ENCODE measurements at regions of chr6 and their contacts with region 1.

Region 1: DNA sequence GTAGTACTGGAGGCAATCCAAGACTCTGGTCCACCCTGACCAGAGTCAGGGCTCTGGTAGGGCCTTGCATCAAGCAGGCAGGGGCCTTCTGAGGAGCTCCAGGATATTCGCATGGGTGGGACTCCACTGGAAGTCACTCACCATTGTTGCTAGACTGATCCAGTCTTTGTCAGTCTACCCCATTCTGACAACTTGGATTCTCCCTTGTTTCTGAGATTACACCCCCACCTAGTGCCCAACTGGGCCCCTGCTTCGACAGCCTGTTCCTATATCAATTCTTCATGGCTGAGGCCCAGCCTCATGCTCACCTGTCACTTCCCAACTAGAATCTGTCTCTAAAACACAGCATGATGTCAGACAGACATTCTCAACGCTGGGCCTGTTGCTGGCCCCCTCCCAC is 5.2 kb downstream of the SLC35D3 start:
- DNase-seq: peak in 1 of 2 experiments; percentile 63
- H3K4me3 ChIP-seq: no peak overlapping the region
- H3K4me3 Mint-ChIP-seq: no peak overlapping the region
- H3K27ac Mint-ChIP-seq: no peak overlapping the region
- H3K4me1 ChIP-seq: no peaks in the 10 kb centered on the region
- H3K4me1 Mint-ChIP-seq: no peaks in the 10 kb centered on the region
- H3K27me3 ChIP-seq: no peaks in the 10 kb centered on the region
- H3K27me3 Mint-ChIP-seq: no peaks in the 10 kb centered on the region
- CTCF ChIP-seq: peak; percentile 47 to 51

Region 2: DNA sequence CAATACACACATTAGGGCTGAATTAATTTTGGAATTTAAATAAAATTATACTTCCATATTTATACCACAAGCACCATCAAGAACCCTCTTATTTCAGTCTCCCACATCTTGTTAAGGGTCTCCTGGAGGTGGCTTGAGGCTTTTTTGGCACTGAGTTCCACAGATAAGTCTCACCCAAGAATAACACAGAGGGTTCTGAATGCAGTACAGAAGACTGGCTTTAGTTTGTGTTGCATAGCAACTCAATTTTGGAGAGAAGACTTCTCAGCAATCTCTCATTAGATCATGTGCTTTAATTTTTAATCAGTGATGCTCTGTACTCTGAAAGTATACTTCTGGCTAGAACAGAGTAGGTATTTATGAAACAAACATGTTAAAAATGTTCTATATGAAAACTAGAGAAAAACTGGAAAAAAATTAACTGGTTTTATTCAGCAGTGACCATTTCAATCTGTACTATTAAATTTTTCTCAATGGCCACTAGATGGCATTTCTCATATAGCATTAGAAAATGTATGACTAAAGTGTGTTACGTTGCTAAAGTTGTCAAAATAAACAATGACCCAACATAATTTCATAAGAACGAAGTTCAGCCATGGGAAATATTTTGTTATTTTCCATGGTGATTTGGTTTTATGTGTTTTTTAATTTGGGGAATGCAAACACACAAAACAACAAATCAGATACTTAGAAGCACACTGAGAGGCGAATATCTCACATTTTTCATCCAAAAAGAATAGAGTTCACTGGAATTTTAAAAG is 344.4 kb before region 1 on chr6:
- CTCF ChIA-PET with region 1: no interaction called
- POLR2A ChIA-PET with region 1: no interaction called
- intact Hi-C with region 1: loop called (anchors 2 kb)
- DNase-seq: no peak
- H3K4me3 ChIP-seq: no peak overlapping the region
- H3K4me3 Mint-ChIP-seq: no peak overlapping the region
- H3K27ac Mint-ChIP-seq: no peak overlapping the region
- H3K4me1 ChIP-seq: no peaks in the 10 kb centered on the region
- H3K4me1 Mint-ChIP-seq: peaks cover 3% of the 10 kb centered on the region
- H3K27me3 ChIP-seq: no peaks in the 10 kb centered on the region
- H3K27me3 Mint-ChIP-seq: no peaks in the 10 kb centered on the region
- CTCF ChIP-seq: peak; percentile 45 to 47

Region 3: DNA sequence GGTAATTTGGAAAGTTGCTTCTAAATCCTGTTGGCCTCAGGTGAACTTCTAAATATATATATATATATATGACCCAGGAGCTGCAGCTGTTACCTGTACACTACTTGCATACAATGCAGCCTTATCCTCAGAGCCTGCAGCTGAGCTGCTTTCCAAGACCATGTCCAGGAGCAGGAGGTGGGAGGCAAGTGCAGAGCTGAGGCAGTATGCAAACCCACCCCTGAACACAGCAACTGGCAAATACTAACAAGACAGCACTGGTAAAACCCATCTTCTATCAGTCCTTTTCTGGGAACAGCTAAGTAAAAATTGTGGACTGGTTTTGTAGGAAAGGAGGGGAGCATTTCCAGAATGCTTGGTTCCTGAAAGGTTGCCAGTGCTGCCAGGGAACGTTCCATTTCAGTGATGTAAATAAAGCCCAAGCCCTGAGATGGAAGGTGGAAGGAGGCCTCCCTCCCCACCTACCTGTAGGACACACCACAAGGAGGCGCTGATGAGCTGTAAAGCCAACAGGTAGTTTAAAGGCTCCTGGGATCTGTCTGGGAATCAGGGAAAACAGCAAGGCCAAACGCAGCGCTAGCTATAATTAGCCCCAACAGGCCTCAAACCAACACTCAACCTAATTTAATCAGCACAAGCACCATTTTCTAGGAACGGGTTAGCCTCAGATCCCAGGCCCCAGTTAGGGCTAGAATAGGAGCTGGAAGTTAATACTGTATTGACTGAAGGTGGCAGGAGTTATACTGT is 283.3 kb before region 1 on chr6:
- CTCF ChIA-PET with region 1: interaction called, 3 read pairs
- POLR2A ChIA-PET with region 1: no interaction called
- intact Hi-C with region 1: loop called (anchors 1 kb)
- DNase-seq: peak; percentile 83 to 87
- H3K4me3 ChIP-seq: no peak overlapping the region
- H3K4me3 Mint-ChIP-seq: no peak overlapping the region
- H3K27ac Mint-ChIP-seq: no peak overlapping the region
- H3K4me1 ChIP-seq: peaks cover 5% of the 10 kb centered on the region; the same call in 1 of the 2 replicates
- H3K4me1 Mint-ChIP-seq: no peaks in the 10 kb centered on the region
- H3K27me3 ChIP-seq: no peaks in the 10 kb centered on the region
- H3K27me3 Mint-ChIP-seq: no peaks in the 10 kb centered on the region
- CTCF ChIP-seq: peak; percentile 85 to 93

Region 4: DNA sequence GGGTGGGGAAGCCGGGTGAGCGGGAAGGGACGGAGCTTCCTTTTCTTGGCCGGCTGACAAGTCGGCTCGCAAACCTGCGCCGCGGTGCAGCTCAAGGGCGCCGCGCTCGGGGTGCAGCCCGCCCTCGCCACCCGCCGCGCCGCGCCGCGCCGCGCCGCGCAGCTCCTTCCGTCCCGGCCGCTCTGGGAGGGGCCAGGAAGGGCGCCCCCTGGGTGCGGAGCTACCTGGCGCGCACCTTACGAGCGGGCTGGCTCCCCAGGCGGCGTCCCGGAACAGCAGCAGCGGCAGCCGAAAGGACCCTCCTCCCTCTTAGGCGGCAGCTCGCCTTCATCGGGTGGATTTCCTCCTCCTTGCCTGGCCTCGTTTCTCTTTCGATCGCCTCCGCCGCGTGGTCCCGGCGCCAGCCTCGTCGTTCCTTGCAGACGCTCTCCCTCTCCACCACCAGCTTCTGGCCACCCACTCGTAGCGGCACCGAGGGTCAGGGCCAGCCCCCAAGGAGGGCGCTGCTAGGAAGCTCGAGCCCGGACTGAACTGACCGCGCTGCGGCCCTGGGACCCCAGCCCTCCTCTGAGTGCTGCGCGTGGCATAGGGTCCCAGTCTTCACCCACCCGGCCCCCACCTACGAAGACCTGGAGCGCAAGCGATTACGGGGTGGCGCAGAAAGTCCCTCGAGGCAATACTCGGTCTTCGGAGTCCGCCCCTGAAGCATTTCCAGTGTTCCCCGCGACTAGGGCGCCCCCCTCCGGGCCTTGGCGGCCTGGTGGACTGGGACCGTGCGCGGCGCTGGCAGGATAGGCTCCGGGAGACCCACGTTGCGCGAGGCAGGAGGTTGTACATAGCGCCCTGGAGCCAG is 134.7 kb before region 1 on chr6 and contains the start of gene MAP3K5:
- CTCF ChIA-PET with region 1: interaction called, 6 read pairs
- POLR2A ChIA-PET with region 1: no interaction called
- intact Hi-C with region 1: loop called (anchors 1 kb)
- DNase-seq: peak; percentile 83 to 94
- H3K4me3 ChIP-seq: peak within 1 kb of the TSS; percentile 60
- H3K4me3 Mint-ChIP-seq: peak within 1 kb of the TSS; percentile 99
- H3K27ac Mint-ChIP-seq: peak within 1 kb of the TSS; percentile 89
- H3K4me1 ChIP-seq: no peaks in the 10 kb centered on the region
- H3K4me1 Mint-ChIP-seq: no peaks in the 10 kb centered on the region
- H3K27me3 ChIP-seq: no peaks in the 10 kb centered on the region
- H3K27me3 Mint-ChIP-seq: no peaks in the 10 kb centered on the region
- CTCF ChIP-seq: peak; percentile 45 to 89
- total RNA-seq, gene MAP3K5: 2.1 and 2.3 TPM in 2 replicates

Region 5: DNA sequence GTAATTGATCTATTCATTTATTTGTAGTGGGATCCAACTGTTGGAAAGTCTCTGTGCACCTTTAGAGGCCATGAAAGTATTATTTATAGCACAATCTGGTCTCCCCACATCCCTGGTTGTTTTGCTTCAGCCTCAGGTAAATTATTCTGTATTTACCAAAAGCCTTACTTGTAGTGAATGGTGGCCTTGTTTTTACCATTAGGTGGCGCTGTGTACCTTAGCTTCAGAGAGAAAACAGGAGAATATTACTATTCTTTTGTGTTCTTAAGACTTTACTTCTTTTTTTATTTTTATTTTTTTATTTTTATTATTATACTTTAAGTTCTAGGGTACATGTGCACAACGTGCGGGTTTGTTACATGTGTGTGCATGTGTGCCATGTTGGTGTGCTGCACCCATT is 81.2 kb before region 1 on chr6:
- CTCF ChIA-PET with region 1: interaction called, 6 read pairs
- POLR2A ChIA-PET with region 1: no interaction called
- intact Hi-C with region 1: loop called (anchors 2 kb)
- DNase-seq: peak in 1 of 2 experiments; percentile 48
- H3K4me3 ChIP-seq: no peak overlapping the region
- H3K4me3 Mint-ChIP-seq: no peak overlapping the region
- H3K27ac Mint-ChIP-seq: no peak overlapping the region
- H3K4me1 ChIP-seq: no peaks in the 10 kb centered on the region
- H3K4me1 Mint-ChIP-seq: peaks cover 7% of the 10 kb centered on the region
- H3K27me3 ChIP-seq: no peaks in the 10 kb centered on the region
- H3K27me3 Mint-ChIP-seq: no peaks in the 10 kb centered on the region
- CTCF ChIP-seq: peak; percentile 61 to 67

Region 6: DNA sequence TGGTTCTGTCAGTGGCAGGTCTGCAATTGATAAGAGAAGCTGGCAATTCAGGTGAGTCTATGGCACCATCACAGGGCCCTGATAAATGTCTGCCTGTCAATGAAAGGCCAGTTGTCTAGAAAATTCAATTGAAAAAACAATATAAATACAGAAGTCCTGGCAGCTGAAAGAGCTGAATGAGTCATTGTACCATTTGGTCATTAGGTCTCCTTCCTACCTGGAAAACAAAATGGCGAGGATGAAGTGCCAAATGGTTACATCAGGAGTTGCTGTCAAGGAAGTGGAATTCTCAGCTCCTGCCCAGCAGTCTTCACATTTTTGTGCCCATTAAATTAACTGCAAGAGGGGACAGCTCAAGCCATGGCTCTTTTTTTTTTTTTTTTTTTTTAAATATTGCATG is 67.2 kb before region 1 on chr6:
- CTCF ChIA-PET with region 1: no interaction called
- POLR2A ChIA-PET with region 1: no interaction called
- intact Hi-C with region 1: loop called (anchors 5 kb)
- DNase-seq: no peak
- H3K4me3 ChIP-seq: no peak overlapping the region
- H3K4me3 Mint-ChIP-seq: no peak overlapping the region
- H3K27ac Mint-ChIP-seq: no peak overlapping the region
- H3K4me1 ChIP-seq: no peaks in the 10 kb centered on the region
- H3K4me1 Mint-ChIP-seq: no peaks in the 10 kb centered on the region
- H3K27me3 ChIP-seq: no peaks in the 10 kb centered on the region
- H3K27me3 Mint-ChIP-seq: no peaks in the 10 kb centered on the region
- CTCF ChIP-seq: no peak

Region 7: DNA sequence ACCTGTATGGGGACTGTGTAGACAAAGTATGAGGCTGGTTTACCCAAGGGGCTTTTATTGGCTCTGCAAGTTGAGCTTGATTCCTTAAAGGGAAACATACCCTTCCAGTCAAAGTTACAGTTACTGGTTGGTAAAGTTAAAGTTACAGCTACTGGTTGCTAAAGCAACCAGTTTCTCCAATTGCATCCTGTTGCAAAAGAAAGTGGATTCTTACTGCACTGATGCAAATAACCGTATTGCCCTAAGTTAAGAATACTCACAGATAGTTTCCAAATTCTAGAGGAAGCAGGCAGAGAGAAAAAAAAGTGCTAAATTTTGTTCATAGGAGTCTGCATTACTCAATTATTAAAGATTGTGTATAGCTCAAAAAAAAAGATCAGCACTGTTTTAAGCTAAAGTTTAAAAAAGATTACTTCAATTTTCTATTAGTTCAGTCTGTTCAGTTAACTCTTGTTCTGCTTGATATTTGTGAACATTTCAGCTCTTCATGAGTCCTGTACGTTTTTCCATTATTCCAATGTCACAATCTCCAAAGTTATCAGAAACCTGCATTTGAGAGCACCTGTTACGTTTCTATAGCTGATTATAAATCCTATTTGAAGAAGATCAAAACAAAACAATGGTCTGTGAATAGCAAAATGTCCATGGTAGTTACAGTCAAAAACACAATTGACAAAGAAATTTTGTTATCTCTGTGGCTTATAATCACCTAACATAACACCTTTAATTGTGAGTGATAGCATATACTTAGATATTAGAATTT is 254.8 kb after region 1 on chr6:
- CTCF ChIA-PET with region 1: no interaction called
- POLR2A ChIA-PET with region 1: no interaction called
- intact Hi-C with region 1: no loop called
- DNase-seq: no peak
- H3K4me3 ChIP-seq: no peak overlapping the region
- H3K4me3 Mint-ChIP-seq: no peak overlapping the region
- H3K27ac Mint-ChIP-seq: no peak overlapping the region
- H3K4me1 ChIP-seq: no peaks in the 10 kb centered on the region
- H3K4me1 Mint-ChIP-seq: no peaks in the 10 kb centered on the region
- H3K27me3 ChIP-seq: no peaks in the 10 kb centered on the region
- H3K27me3 Mint-ChIP-seq: no peaks in the 10 kb centered on the region
- CTCF ChIP-seq: no peak

Region 8: DNA sequence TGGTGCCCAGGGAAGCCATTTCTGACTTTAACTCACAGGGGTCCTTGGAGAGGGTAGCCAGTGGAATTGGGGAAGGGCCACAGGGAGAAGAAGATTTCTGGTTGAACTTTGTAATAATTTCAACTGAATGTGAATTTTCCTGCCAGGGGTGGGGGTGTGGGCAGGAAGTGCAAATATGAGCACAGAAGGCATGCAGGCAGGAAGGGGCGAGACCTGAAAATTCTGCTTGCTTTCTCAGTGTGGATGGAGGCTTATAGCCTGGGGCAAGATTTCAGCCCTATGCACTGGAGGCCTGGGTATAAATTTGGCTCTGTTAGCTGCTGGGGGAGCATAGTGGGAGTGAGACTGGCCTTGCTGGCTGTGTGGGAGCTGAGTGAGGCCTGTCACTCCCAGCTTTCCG is 1125.5 kb after region 1 on chr6:
- CTCF ChIA-PET with region 1: no interaction called
- POLR2A ChIA-PET with region 1: no interaction called
- intact Hi-C with region 1: no loop called
- DNase-seq: no peak
- H3K4me3 ChIP-seq: no peak overlapping the region
- H3K4me3 Mint-ChIP-seq: no peak overlapping the region
- H3K27ac Mint-ChIP-seq: no peak overlapping the region
- H3K4me1 ChIP-seq: no peaks in the 10 kb centered on the region
- H3K4me1 Mint-ChIP-seq: no peaks in the 10 kb centered on the region
- H3K27me3 ChIP-seq: no peaks in the 10 kb centered on the region
- H3K27me3 Mint-ChIP-seq: no peaks in the 10 kb centered on the region
- CTCF ChIP-seq: no peak

Measured in Caco-2 (cell line).